Tibial artery (tissue), 4 donors: ENCODE measurements at regions of chr4 and their contacts with region 1.

Region 1: GRCh38 chr4:98939892-98940298 is 11.0 kb upstream of the EIF4E start:
- DNase-seq: no peak
- H3K4me3 ChIP-seq: no peak overlapping the region
- H3K27ac ChIP-seq: no peak overlapping the region
- H3K4me1 ChIP-seq: peaks cover 0 to 3% (median 0%) of the 10 kb centered on the region in 4 donors
- H3K27me3 ChIP-seq: no peaks in the 10 kb centered on the region
- CTCF ChIP-seq: peak; percentile 62 to 67

Region 2: GRCh38 chr4:99468889-99469288 is 529.0 kb after region 1 on chr4:
- intact Hi-C with region 1: loop called (anchors 5 kb)
- DNase-seq: no peak
- H3K4me3 ChIP-seq: no peak overlapping the region
- H3K27ac ChIP-seq: no peak overlapping the region
- H3K4me1 ChIP-seq: no peaks in the 10 kb centered on the region
- H3K27me3 ChIP-seq: no peaks in the 10 kb centered on the region
- CTCF ChIP-seq: no peak